ENCODE measurements at regions of chr13 and their contacts with region 1.

Region 1: DNA sequence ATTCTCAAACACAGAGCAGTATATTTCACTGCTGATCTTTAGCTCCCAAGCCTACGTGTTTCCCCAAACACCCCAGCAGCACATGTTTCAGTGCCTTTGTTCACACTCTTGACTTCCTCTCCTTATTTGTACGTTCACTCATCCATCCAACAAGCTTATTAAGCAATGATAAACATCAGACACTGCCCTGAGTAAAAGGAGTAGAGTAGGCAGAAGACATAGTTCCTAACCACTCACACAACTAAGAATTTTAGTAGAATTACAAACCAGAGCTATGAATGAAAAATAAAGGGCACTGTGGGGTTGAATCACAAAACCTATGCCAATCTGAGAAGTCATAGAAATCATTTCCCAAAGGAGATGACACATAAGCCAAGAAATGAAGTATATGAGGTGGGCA is 213.5 kb downstream of the DIAPH3 start:
- DNase-seq: no peak
- ATAC-seq: peak; percentile 20; the same call in 2 of the 3 replicates
- H3K4me3 ChIP-seq: no peak overlapping the region
- H3K27ac ChIP-seq: no peak overlapping the region
- H3K4me1 ChIP-seq: no peaks in the 10 kb centered on the region
- H3K27me3 ChIP-seq: no peaks in the 10 kb centered on the region
- CTCF ChIP-seq: no peak
- EP300 ChIP-seq: no peak
- POLR2A ChIP-seq: no peak
- RAD21 ChIP-seq: no peak

Region 2: GRCh38 chr13:59960683-59961082 is 10.4 kb after region 1 on chr13:
- CTCF ChIA-PET with region 1: interaction called, 13 read pairs
- POLR2A ChIA-PET with region 1: no interaction called
- RAD21 ChIA-PET with region 1: no interaction called
- SMC1A ChIA-PET with region 1: interaction called, 9 read pairs
- in situ Hi-C with region 1: no loop called
- intact Hi-C with region 1: no loop called
- DNase-seq: no peak
- ATAC-seq: no peak
- H3K4me3 ChIP-seq: no peak overlapping the region
- H3K27ac ChIP-seq: no peak overlapping the region
- H3K4me1 ChIP-seq: no peaks in the 10 kb centered on the region
- H3K27me3 ChIP-seq: no peaks in the 10 kb centered on the region
- CTCF ChIP-seq: no peak
- EP300 ChIP-seq: no peak
- POLR2A ChIP-seq: no peak
- RAD21 ChIP-seq: no peak

Region 3: DNA sequence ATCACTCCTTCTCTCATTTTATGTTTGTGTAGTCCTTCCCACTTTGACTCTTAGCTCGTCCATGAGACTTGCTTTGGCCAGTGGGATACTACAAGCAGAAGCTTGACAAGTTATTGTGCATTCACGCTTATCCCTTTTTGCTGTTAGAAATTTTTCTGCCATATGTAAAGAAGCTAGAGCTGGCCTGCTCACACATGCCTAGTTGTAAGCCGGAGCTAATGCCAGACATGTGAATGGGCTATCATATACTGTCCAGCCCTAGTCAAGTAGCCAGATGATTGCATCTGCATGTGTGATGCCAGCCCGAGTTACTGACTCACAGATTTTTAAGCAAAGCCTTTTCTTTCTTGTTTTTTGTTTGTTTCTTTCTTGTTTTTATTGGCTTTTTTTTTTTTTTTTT is 907.4 kb after region 1 on chr13:
- CTCF ChIA-PET with region 1: no interaction called
- POLR2A ChIA-PET with region 1: no interaction called
- RAD21 ChIA-PET with region 1: no interaction called
- SMC1A ChIA-PET with region 1: no interaction called
- in situ Hi-C with region 1: no loop called
- intact Hi-C with region 1: no loop called
- DNase-seq: no peak
- ATAC-seq: no peak
- H3K4me3 ChIP-seq: no peak overlapping the region
- H3K27ac ChIP-seq: no peak overlapping the region
- H3K4me1 ChIP-seq: no peaks in the 10 kb centered on the region
- H3K27me3 ChIP-seq: no peaks in the 10 kb centered on the region
- CTCF ChIP-seq: no peak
- EP300 ChIP-seq: no peak
- POLR2A ChIP-seq: no peak
- RAD21 ChIP-seq: no peak